ENCODE measurements at regions of chr11 and their contacts with region 1.

Region 1: GRCh38 chr11:83249972-83250593 is 36.1 kb downstream of the CCDC90B start:
- DNase-seq: peak in 1 of 2 experiments; percentile 42
- H3K4me3 ChIP-seq: no peak overlapping the region
- H3K4me3 Mint-ChIP-seq: no peak overlapping the region
- H3K27ac Mint-ChIP-seq: no peak overlapping the region
- H3K4me1 ChIP-seq: peaks cover 9% of the 10 kb centered on the region
- H3K4me1 Mint-ChIP-seq: peaks cover 10% of the 10 kb centered on the region
- H3K27me3 ChIP-seq: no peaks in the 10 kb centered on the region
- H3K27me3 Mint-ChIP-seq: no peaks in the 10 kb centered on the region
- CTCF ChIP-seq: peak; percentile 78 to 91

Region 2: GRCh38 chr11:82718307-82718706 is 531.8 kb before region 1 on chr11:
- CTCF ChIA-PET with region 1: no interaction called
- POLR2A ChIA-PET with region 1: no interaction called
- intact Hi-C with region 1: loop called (anchors 1 kb)
- DNase-seq: peak in 1 of 2 experiments; percentile 35
- H3K4me3 ChIP-seq: no peak overlapping the region
- H3K4me3 Mint-ChIP-seq: no peak overlapping the region
- H3K27ac Mint-ChIP-seq: no peak overlapping the region
- H3K4me1 ChIP-seq: no peaks in the 10 kb centered on the region
- H3K4me1 Mint-ChIP-seq: no peaks in the 10 kb centered on the region
- H3K27me3 ChIP-seq: peaks cover 1% of the 10 kb centered on the region; the same call in 1 of the 2 replicates
- H3K27me3 Mint-ChIP-seq: peaks cover 4% of the 10 kb centered on the region
- CTCF ChIP-seq: peak; percentile 88 to 94

Region 3: GRCh38 chr11:82867495-82868082 is 382.5 kb before region 1 on chr11:
- CTCF ChIA-PET with region 1: no interaction called
- POLR2A ChIA-PET with region 1: no interaction called
- intact Hi-C with region 1: loop called (anchors 2 kb)
- DNase-seq: peak; percentile 84 to 89
- H3K4me3 ChIP-seq: no peak overlapping the region
- H3K4me3 Mint-ChIP-seq: no peak overlapping the region
- H3K27ac Mint-ChIP-seq: no peak overlapping the region
- H3K4me1 ChIP-seq: no peaks in the 10 kb centered on the region
- H3K4me1 Mint-ChIP-seq: no peaks in the 10 kb centered on the region
- H3K27me3 ChIP-seq: no peaks in the 10 kb centered on the region
- H3K27me3 Mint-ChIP-seq: no peaks in the 10 kb centered on the region
- CTCF ChIP-seq: peak; percentile 75 to 95

Region 4: GRCh38 chr11:82906244-82906654 is 343.8 kb before region 1 on chr11:
- CTCF ChIA-PET with region 1: no interaction called
- POLR2A ChIA-PET with region 1: no interaction called
- intact Hi-C with region 1: loop called (anchors 1 kb)
- DNase-seq: no peak
- H3K4me3 ChIP-seq: no peak overlapping the region
- H3K4me3 Mint-ChIP-seq: no peak overlapping the region
- H3K27ac Mint-ChIP-seq: no peak overlapping the region
- H3K4me1 ChIP-seq: no peaks in the 10 kb centered on the region; the same call in 1 of the 2 replicates
- H3K4me1 Mint-ChIP-seq: peaks cover 21% of the 10 kb centered on the region
- H3K27me3 ChIP-seq: no peaks in the 10 kb centered on the region
- H3K27me3 Mint-ChIP-seq: no peaks in the 10 kb centered on the region
- CTCF ChIP-seq: peak; percentile 59 to 75

Region 5: GRCh38 chr11:83087035-83087434 is 163.0 kb before region 1 on chr11:
- CTCF ChIA-PET with region 1: interaction called, 6 read pairs
- POLR2A ChIA-PET with region 1: no interaction called
- intact Hi-C with region 1: loop called (anchors 1 kb)
- DNase-seq: peak in 1 of 2 experiments; percentile 28
- H3K4me3 ChIP-seq: no peak overlapping the region
- H3K4me3 Mint-ChIP-seq: no peak overlapping the region
- H3K27ac Mint-ChIP-seq: no peak overlapping the region
- H3K4me1 ChIP-seq: peaks cover 13% of the 10 kb centered on the region
- H3K4me1 Mint-ChIP-seq: peaks cover 48% of the 10 kb centered on the region
- H3K27me3 ChIP-seq: no peaks in the 10 kb centered on the region
- H3K27me3 Mint-ChIP-seq: no peaks in the 10 kb centered on the region
- CTCF ChIP-seq: peak; percentile 51 to 61

Region 6: DNA sequence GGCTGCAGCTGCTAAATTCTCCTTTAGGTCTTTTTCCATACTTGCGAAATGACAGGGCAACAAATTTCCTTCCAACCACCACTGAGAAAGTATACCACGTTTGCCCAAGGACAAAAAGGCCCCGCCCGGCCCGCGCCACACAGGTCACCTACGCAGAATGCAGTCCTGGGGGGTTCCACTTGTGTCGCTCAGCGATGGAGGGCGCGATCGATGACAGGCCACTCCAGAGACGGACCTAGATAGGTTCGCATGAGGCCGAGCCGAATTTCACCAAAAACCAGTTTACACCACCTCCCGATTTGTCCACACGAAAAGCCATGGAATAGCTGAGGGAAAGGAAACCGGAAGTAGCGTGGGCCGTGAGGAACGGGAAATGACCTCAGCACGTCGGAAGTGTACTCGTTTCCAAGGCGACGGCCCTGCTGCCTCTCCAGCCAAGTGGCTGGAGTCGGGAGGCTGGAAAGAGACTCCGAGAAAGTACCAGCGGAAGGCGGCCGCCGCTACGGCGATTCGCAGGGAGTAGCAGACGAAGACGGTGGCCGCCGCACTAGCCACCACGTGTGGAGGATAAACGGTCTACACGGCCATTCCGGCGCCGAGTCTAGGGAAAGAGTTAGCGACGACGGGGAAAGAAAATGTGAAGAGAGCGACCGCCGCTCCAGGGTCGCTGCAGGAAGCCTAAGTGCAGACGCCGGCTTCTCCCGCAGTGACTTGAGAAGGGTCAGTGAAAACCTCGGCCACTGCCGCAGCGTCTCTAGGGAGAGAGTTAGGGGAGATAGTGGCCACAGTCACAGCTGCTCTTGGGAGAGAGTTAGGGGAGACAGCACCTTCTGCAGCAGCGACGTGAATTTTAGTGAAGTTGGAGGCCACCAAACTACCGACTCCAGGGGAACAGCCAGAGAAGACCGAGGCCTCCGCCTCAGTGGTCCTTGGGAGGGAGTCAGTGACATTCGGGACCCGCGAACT is 56.5 kb before region 1 on chr11 and contains the start of gene ANKRD42:
- CTCF ChIA-PET with region 1: interaction called, 9 read pairs
- POLR2A ChIA-PET with region 1: no interaction called
- intact Hi-C with region 1: loop called (anchors 1 kb)
- DNase-seq: peak; percentile 96 to 97
- H3K4me3 ChIP-seq: peak within 1 kb of the TSS; percentile 77
- H3K4me3 Mint-ChIP-seq: peak within 1 kb of the TSS; percentile 80
- H3K27ac Mint-ChIP-seq: peak within 1 kb of the TSS; percentile 89
- H3K4me1 ChIP-seq: peaks cover 7% of the 10 kb centered on the region; the same call in 1 of the 2 replicates
- H3K4me1 Mint-ChIP-seq: peaks cover 30% of the 10 kb centered on the region
- H3K27me3 ChIP-seq: no peaks in the 10 kb centered on the region
- H3K27me3 Mint-ChIP-seq: no peaks in the 10 kb centered on the region
- CTCF ChIP-seq: peak in 1 of 2 experiments; percentile 4
- total RNA-seq, gene ANKRD42: 8.3 and 9.0 TPM in 2 replicates

Region 7: DNA sequence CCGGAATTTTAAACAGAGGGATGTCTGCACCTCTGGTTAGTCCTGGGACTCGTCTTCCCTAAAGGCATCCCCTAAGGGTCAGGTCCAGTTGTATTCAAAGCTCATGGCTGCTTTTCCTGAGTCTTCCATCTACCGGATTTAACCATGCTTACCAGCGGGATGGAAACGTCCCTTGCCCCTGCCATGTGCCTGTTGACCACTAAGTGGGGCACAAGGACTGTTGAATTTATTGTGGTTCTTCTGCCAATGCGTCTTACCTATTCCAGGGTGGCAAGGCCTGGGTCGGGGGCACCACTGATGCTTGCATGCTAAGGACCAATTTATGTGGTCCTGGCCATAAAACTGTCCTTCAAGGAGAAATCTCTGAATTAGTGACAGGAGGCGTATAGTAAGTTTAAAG is 31.0 kb before region 1 on chr11:
- CTCF ChIA-PET with region 1: no interaction called
- POLR2A ChIA-PET with region 1: no interaction called
- intact Hi-C with region 1: loop called (anchors 1 kb)
- DNase-seq: peak in 1 of 2 experiments; percentile 56
- H3K4me3 ChIP-seq: no peak overlapping the region
- H3K4me3 Mint-ChIP-seq: no peak overlapping the region
- H3K27ac Mint-ChIP-seq: no peak overlapping the region
- H3K4me1 ChIP-seq: no peaks in the 10 kb centered on the region
- H3K4me1 Mint-ChIP-seq: no peaks in the 10 kb centered on the region
- H3K27me3 ChIP-seq: no peaks in the 10 kb centered on the region; the same call in 1 of the 2 replicates
- H3K27me3 Mint-ChIP-seq: no peaks in the 10 kb centered on the region
- CTCF ChIP-seq: peak; percentile 75 to 79

Region 8: GRCh38 chr11:83272627-83273026 is 22.5 kb after region 1 on chr11:
- CTCF ChIA-PET with region 1: no interaction called
- POLR2A ChIA-PET with region 1: no interaction called
- intact Hi-C with region 1: no loop called
- DNase-seq: no peak
- H3K4me3 ChIP-seq: no peak overlapping the region
- H3K4me3 Mint-ChIP-seq: no peak overlapping the region
- H3K27ac Mint-ChIP-seq: no peak overlapping the region
- H3K4me1 ChIP-seq: peaks cover 21% of the 10 kb centered on the region
- H3K4me1 Mint-ChIP-seq: peaks cover 27% of the 10 kb centered on the region
- H3K27me3 ChIP-seq: no peaks in the 10 kb centered on the region
- H3K27me3 Mint-ChIP-seq: no peaks in the 10 kb centered on the region
- CTCF ChIP-seq: no peak